ENCODE measurements at regions of chr9 and their contacts with region 1.

Region 1: DNA sequence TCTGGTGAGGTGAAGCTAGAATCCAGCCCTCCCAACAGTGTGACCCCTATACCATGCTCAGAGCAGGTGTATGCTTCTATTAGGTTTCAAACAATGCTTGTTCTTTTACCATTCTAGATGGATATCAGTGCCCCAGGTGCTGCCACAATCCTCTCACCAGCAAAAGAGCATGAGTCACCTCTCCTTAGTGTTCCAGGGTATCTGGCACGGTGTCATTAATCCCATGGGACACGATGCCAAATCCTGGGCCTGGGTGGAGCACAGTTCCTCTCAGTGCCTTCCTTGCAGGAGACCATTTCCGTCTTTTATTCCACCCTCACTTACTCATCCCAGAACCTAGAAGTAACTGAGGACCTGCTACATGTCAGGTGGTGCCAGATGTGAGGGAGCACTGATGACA is 1.3 kb upstream of the OR13J1 start:
- DNase-seq: no peak
- ATAC-seq: peak; percentile 36
- H3K4me3 ChIP-seq: no peak overlapping the region
- H3K27ac ChIP-seq: no peak overlapping the region
- H3K4me1 ChIP-seq: no peaks in the 10 kb centered on the region
- H3K27me3 ChIP-seq: no peaks in the 10 kb centered on the region
- CTCF ChIP-seq: no peak

Region 2: DNA sequence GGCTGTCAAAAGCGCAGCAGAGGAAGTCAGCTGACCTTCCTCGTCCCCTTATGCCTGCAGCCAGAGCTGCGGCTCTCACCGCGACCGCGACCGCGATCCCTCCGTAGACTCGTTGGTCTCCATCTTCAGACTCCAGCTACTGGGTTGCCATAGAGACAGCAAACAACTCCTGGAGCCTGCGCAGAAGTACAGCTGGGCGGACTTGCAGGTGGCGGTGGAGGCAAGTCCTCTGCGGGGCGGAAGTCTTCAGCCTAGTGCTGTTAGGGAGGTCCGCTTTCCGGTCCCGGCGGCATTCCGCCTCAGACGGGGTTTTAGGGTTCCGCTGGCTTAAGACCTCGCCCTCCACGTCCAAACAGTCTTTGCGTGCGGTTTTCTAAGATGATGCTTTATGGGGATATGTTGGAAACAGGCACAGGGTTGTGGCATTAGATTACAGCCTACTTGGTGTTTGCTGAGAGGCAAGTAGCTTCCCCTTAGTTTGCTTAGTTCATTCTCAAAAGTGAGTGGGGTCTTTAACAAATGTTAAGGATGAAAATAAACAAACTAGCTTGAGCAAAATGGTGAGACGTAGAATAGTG is 59.4 kb before region 1 on chr9 and contains the start of gene SPAG8:
- intact Hi-C with region 1: no loop called
- DNase-seq: peak; percentile 96
- ATAC-seq: peak; percentile 78
- H3K4me3 ChIP-seq: peak within 1 kb of the TSS; percentile 66
- H3K27ac ChIP-seq: peak within 1 kb of the TSS; percentile 67
- H3K4me1 ChIP-seq: peaks cover 31% of the 10 kb centered on the region
- H3K27me3 ChIP-seq: no peaks in the 10 kb centered on the region
- CTCF ChIP-seq: no peak
- total RNA-seq, gene SPAG8: 2.8 TPM

Region 3: DNA sequence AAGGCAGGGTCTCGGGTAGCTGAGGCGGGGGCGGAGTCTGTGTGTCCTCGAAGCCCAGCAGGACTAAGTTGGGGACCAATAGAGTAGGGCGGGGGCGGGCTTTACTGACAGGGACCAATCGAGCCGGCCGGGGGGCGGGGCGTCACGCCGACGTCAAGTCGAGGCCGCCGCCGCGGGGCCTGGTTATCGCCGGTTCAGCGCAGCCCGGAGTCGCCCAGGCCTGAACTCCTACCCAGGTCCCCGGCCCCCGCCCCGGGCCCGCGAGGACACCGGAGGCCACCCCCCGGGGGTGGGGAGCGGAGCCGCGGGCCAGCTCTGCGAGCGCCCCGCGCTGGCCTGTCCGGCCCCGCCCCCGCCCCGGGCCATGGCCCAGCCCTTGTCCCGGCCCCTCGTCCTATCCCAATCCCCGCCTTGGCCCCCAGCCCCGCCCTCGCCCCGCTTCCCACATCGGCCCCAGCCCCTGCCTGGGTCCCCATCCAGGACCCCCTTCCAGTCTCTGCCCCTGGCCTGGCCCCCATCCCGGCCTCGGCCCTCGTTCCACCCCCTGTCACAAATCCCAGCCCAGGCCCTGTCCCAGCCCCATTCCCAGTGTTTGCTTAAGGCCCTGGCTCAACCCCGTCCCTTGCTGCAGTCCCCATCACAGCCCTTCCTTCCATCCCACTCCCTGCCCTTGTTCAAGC is 42.3 kb before region 1 on chr9 and contains the start of gene TMEM8B:
- intact Hi-C with region 1: loop called (anchors 10 kb)
- DNase-seq: peak; percentile 98
- ATAC-seq: peak; percentile 92
- H3K4me3 ChIP-seq: peak within 1 kb of the TSS; percentile 69
- H3K27ac ChIP-seq: peak within 1 kb of the TSS; percentile 90
- H3K4me1 ChIP-seq: peaks cover 19% of the 10 kb centered on the region
- H3K27me3 ChIP-seq: no peaks in the 10 kb centered on the region
- CTCF ChIP-seq: no peak
- total RNA-seq, gene TMEM8B: 13.7 TPM

Measured in upper lobe of right lung (tissue), 1 donor.